ENCODE measurements at regions of chr3 and their contacts with region 1.

Region 1: GRCh38 chr3:112405845-112406244 is 72.9 kb downstream of the CD200 start:
- DNase-seq: no peak
- H3K4me3 ChIP-seq: no peak overlapping the region
- H3K27ac ChIP-seq: no peak overlapping the region
- H3K4me1 ChIP-seq: peaks cover under 1 to 18% (median 9%) of the 10 kb centered on the region in 4 experiments; a peak in 6 of 7 replicates
- H3K27me3 ChIP-seq: no peaks in the 10 kb centered on the region
- CTCF ChIP-seq: no peak
- EP300 ChIP-seq: no peak
- POLR2A ChIP-seq: no peak
- RAD21 ChIP-seq: no peak

Region 2: DNA sequence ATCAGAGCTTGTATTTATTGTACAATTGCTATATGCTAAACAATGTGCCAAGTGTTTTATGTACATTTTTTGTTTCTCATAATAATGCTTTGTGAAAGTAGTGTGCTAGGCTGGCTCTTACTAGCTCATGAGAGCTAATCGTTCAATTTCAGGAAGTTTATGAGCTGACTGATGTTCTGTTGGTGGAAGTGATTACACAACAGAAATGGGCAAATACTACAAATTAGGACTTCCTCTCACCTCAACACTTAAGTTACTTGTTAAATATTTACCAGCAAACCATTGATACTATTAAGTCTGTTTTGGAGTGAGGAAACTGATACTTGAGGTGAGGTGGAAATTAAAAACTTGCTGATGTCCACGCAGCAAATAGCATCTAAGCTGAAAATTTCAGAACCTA is 144.1 kb before region 1 on chr3:
- CTCF ChIA-PET with region 1: no interaction called
- POLR2A ChIA-PET with region 1: no interaction called
- DNase-seq: no peak
- H3K4me3 ChIP-seq: no peak overlapping the region
- H3K27ac ChIP-seq: no peak overlapping the region
- H3K4me1 ChIP-seq: no peaks in the 10 kb centered on the region
- H3K27me3 ChIP-seq: no peaks in the 10 kb centered on the region
- CTCF ChIP-seq: no peak
- EP300 ChIP-seq: no peak
- POLR2A ChIP-seq: no peak
- RAD21 ChIP-seq: no peak

Region 3: DNA sequence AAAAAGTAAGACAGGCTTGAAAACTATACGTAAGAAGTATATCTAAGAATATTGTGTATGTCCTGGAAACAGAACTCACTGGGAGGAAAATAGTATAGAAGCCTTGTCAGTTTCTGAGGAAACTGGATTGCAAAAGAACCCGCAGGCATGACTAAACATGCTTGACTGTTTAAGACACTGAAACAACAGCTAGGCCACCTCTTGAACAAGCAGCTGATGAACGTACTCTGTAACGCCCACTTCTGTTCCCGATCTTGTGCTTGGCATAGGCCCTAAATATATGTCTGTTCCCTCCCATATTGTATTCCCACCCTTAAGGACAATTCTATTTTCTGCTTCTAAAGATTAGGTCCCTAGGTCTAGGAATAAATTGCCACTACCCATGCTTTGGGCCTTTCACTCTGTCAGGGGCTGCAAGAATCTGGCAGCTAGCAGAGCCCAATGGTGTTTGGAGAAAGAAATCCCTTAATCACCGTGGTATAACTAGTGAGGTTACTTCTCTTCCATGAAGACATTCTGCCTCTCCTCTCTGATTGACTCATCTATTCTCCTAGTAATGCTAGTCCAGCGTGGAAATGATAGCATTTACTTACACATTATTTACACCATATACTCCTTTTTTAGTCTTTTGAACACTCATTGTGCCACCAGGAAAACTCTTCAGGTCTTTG is 26.7 kb before region 1 on chr3:
- CTCF ChIA-PET with region 1: no interaction called
- POLR2A ChIA-PET with region 1: no interaction called
- DNase-seq: no peak
- H3K4me3 ChIP-seq: no peak overlapping the region
- H3K27ac ChIP-seq: no peak overlapping the region
- H3K4me1 ChIP-seq: no peaks in the 10 kb centered on the region; a peak in 1 of 7 replicates
- H3K27me3 ChIP-seq: no peaks in the 10 kb centered on the region
- CTCF ChIP-seq: no peak
- EP300 ChIP-seq: no peak
- POLR2A ChIP-seq: no peak
- RAD21 ChIP-seq: no peak

Region 4: DNA sequence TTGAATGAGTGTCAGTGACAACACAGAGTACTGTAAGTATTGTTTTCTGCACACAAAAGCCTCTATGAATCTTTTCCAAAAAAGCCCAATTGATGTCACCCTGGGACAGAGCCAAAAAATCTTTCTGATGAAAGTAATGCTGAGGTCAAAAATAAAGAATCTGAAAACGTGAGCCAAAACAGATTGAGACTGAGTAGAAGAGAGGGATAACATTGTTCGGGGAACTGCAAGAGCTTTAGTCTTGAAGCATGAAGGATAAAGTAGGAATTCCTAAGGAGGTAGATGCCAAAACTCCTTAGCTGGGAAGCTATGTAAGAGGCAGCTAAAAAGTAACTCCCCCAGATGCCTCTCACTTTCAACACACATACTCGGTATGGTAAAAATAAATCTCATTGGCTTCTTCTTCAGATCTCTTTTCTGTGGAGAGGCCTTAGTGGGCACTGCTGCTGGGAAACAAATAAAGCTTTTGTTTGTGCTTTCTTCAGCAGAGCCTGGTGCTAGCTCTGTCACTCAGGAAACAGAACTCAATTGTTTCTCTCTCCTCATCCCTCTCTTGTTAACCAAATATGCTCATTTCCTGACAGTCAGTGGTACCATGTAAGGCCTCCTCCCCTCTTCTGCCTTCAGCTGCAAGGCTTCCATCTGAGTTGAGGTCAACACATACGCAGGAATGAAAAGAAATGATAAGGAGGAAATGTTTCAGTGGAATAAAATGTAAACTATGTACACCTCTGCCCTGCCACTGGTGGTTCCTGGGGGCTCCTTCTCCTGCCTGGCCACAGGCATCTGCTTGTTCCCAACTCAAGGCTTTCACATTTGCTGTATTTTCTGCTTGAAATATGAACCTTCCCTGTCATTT is 14.8 kb before region 1 on chr3:
- CTCF ChIA-PET with region 1: interaction called, 3 read pairs
- POLR2A ChIA-PET with region 1: interaction called, 17 read pairs
- DNase-seq: peak in 1 of 2 experiments; percentile 38
- H3K4me3 ChIP-seq: no peak overlapping the region; a peak in 1 of 8 replicates
- H3K27ac ChIP-seq: peak overlapping the region; percentile 63; the same call in 1 of the 2 replicates
- H3K4me1 ChIP-seq: peaks cover 4 to 13% (median 6%) of the 10 kb centered on the region in 4 experiments; a peak in 4 of 7 replicates
- H3K27me3 ChIP-seq: no peaks in the 10 kb centered on the region
- CTCF ChIP-seq: no peak
- EP300 ChIP-seq: no peak
- POLR2A ChIP-seq: no peak
- RAD21 ChIP-seq: 0 out of 4 replicates have a peak, but pooled peaks of 1 of the 2 experiments have one; percentile 2

Region 5: DNA sequence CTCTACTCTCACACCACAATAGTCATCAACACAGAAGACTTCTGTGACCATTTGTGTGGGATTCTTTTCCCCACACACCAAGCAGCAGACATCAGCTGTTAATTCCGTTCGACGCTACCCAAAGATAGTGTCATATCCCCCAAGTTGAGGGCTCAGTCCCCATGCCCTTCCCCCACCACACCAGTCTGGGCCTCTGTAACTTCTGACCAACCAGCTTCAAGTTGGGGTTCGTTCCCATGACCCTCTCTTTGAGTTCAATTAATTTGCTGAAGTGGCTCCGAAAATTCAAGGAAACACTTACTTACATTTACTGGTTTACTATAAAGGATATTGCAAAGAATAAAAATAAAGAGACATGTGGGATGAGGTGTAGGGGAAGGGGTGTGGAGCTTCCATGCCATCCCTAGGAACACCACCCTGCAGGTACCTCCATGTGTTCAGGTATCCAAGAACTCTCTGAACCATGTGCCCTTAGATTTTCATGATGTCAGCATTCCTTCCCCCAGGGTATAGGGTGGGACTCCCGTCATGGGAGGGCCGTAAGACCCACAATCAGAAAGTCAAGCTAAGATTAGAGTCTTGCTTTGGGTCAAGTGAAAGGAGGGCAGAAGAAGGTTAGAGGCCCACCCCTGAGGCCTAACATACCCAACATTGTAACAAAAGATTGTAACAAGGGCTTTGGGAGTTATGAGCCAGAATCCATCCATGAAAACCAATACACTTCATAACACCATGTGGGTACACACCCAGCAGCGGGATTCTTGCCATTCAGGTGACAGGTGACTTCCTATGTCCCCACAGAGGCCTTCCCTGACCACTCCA is 10.8 kb after region 1 on chr3:
- CTCF ChIA-PET with region 1: interaction called, 4 read pairs
- POLR2A ChIA-PET with region 1: interaction called, 15 read pairs
- DNase-seq: peak in 1 of 2 experiments; percentile 50
- H3K4me3 ChIP-seq: no peak overlapping the region
- H3K27ac ChIP-seq: no peak overlapping the region
- H3K4me1 ChIP-seq: peaks cover 0 to 8% (median 3%) of the 10 kb centered on the region in 4 experiments; a peak in 2 of 7 replicates
- H3K27me3 ChIP-seq: no peaks in the 10 kb centered on the region
- CTCF ChIP-seq: no peak
- EP300 ChIP-seq: no peak
- POLR2A ChIP-seq: peak; percentile 9 to 24
- RAD21 ChIP-seq: no peak

Region 6: GRCh38 chr3:112446343-112446742 is 40.5 kb after region 1 on chr3:
- CTCF ChIA-PET with region 1: no interaction called
- POLR2A ChIA-PET with region 1: no interaction called
- DNase-seq: no peak
- H3K4me3 ChIP-seq: no peak overlapping the region
- H3K27ac ChIP-seq: no peak overlapping the region
- H3K4me1 ChIP-seq: no peaks in the 10 kb centered on the region
- H3K27me3 ChIP-seq: no peaks in the 10 kb centered on the region
- CTCF ChIP-seq: no peak
- EP300 ChIP-seq: no peak
- POLR2A ChIP-seq: no peak
- RAD21 ChIP-seq: no peak